PC-3 (cell line): ENCODE measurements at regions of chr5 and their contacts with region 1.

Region 1: GRCh38 chr5:130168211-130168610 is 263.9 kb downstream of the CHSY3 start:
- DNase-seq: peak; percentile 74
- ATAC-seq: peak; percentile 94
- H3K4me3 ChIP-seq: no peak overlapping the region
- H3K27ac ChIP-seq: peak overlapping the region; percentile 58
- H3K4me1 ChIP-seq: peaks cover 19% of the 10 kb centered on the region
- H3K27me3 ChIP-seq: no peaks in the 10 kb centered on the region
- CTCF ChIP-seq: no peak

Region 2: DNA sequence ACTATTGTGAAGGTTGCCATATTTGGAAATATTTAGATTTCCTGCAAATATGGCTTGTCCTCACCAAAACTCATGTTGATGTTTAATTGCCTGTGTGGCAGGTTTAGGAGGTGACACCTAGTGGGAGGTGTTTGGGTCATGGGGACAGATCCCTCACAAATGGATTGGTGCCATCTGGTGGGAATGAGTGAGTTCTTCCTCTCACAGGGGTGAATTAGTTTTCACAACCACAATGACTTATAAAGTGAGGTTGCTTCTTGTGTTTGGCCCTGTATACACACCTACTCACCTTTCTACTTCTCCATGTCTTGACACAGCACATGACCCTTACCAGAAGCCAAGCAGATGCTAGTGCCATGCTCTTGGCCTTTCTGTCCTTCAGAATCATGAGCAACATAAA is 1032.6 kb before region 1 on chr5:
- CTCF ChIA-PET with region 1: no interaction called
- POLR2A ChIA-PET with region 1: no interaction called
- intact Hi-C with region 1: no loop called
- DNase-seq: peak; percentile 41
- ATAC-seq: no peak; the same call in 1 of the 2 replicates
- H3K4me3 ChIP-seq: no peak overlapping the region
- H3K27ac ChIP-seq: no peak overlapping the region
- H3K4me1 ChIP-seq: no peaks in the 10 kb centered on the region
- H3K27me3 ChIP-seq: no peaks in the 10 kb centered on the region
- CTCF ChIP-seq: peak; percentile 44

Region 3: GRCh38 chr5:130183115-130183514 is 14.9 kb after region 1 on chr5:
- CTCF ChIA-PET with region 1: no interaction called
- POLR2A ChIA-PET with region 1: no interaction called
- intact Hi-C with region 1: no loop called
- DNase-seq: no peak
- ATAC-seq: no peak
- H3K4me3 ChIP-seq: no peak overlapping the region
- H3K27ac ChIP-seq: no peak overlapping the region
- H3K4me1 ChIP-seq: no peaks in the 10 kb centered on the region
- H3K27me3 ChIP-seq: no peaks in the 10 kb centered on the region
- CTCF ChIP-seq: no peak

Region 4: DNA sequence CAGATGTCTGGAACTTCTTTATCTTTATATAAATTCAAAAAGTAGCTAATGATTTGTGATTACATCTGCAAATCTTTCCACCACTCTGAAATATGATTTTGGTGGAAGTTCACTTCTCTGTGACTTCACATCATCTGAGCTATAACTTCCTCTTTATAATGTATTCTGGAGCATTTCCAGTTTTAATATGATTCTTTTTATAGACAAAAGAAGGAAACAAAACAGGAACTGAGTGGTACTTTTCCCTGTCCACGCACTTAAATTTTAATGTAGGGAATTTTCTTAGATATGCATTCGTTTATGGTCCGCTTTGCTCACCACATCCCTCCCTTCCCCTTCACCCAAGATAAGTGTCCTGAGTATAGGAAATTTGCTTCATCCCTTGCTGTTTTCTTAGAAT is 69.5 kb after region 1 on chr5:
- CTCF ChIA-PET with region 1: no interaction called
- POLR2A ChIA-PET with region 1: no interaction called
- intact Hi-C with region 1: no loop called
- DNase-seq: no peak
- ATAC-seq: no peak
- H3K4me3 ChIP-seq: no peak overlapping the region
- H3K27ac ChIP-seq: no peak overlapping the region
- H3K4me1 ChIP-seq: no peaks in the 10 kb centered on the region
- H3K27me3 ChIP-seq: no peaks in the 10 kb centered on the region
- CTCF ChIP-seq: no peak

Region 5: DNA sequence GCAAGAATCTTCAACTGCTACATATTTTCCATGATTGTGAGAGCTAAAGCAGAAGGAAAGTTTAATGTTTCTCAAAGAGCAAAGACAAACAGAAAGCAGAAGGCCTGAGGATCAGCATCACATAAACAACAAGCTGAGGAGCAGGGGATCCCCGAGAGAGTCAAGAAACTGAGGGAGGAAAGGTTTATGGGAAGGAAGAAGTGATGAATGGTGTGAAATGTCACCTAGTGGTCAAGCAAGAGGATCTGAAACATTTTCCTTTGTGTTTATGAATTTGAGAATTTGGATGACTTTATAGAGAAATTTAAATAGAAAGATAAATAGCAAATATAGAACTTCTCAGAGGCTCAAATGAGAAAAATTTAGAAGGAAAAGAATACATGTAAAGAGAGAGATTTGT is 217.9 kb after region 1 on chr5:
- CTCF ChIA-PET with region 1: no interaction called
- POLR2A ChIA-PET with region 1: no interaction called
- intact Hi-C with region 1: no loop called
- DNase-seq: no peak
- ATAC-seq: no peak
- H3K4me3 ChIP-seq: no peak overlapping the region
- H3K27ac ChIP-seq: no peak overlapping the region
- H3K4me1 ChIP-seq: no peaks in the 10 kb centered on the region
- H3K27me3 ChIP-seq: no peaks in the 10 kb centered on the region
- CTCF ChIP-seq: no peak

Region 6: DNA sequence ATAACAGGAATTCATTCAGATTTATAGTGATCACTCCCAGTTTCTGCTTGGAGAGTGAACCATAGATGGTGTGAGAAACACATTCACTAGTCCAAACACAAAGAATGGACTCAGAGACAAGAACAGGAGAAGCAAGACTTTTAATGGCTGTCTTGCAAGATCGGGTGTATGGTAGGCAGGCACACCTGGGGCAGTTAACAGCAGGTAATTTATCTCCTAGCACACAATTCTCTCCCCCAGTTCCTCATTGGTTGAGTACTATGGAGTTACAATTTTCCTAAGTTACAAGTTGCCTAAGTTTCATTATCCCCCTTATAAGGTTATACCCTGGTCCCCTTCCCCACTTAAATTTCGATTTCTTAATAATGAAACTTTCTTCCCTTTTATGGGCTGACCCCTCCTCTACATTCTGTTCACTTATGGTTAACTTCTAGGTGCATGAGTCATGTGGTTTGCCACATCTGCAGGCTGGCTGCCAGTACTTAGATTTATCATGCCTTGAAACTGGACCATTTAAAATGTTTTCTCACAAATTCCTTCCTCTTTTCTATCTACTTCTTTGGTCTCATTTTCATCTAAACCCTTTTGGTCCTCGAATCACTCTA is 373.5 kb after region 1 on chr5:
- CTCF ChIA-PET with region 1: no interaction called
- POLR2A ChIA-PET with region 1: no interaction called
- intact Hi-C with region 1: loop called (anchors 10 kb)
- DNase-seq: peak; percentile 86
- ATAC-seq: peak; percentile 65
- H3K4me3 ChIP-seq: peak overlapping the region; percentile 3; the same call in 1 of the 2 replicates
- H3K27ac ChIP-seq: peak overlapping the region; percentile 88
- H3K4me1 ChIP-seq: peaks cover 46% of the 10 kb centered on the region
- H3K27me3 ChIP-seq: no peaks in the 10 kb centered on the region
- CTCF ChIP-seq: no peak